ENCODE measurements at regions of chr4 and their contacts with region 1.

Region 1: GRCh38 chr4:107896158-107897045 is 34.9 kb upstream of the CYP2U1 start:
- DNase-seq: peak in 1 of 2 donors; percentile 10
- H3K4me3 ChIP-seq: no peak overlapping the region
- H3K27ac ChIP-seq: peak overlapping the region in 2 of 3 donors; percentile 52 to 58
- H3K4me1 ChIP-seq: peaks cover 32 to 35% of the 10 kb centered on the region in 2 donors
- H3K27me3 ChIP-seq: no peaks in the 10 kb centered on the region
- CTCF ChIP-seq: no peak
- POLR2A ChIP-seq: no peak

Region 2: GRCh38 chr4:107824353-107825071 is 71.9 kb before region 1 on chr4 and contains the start of gene SGMS2:
- intact Hi-C with region 1: loop called (anchors 10 kb)
- DNase-seq: peak; percentile 96 to 97
- H3K4me3 ChIP-seq: peak within 1 kb of the TSS; percentile 27 to 70 (median 64)
- H3K27ac ChIP-seq: peak within 1 kb of the TSS; percentile 94 to 96 (median 96)
- H3K4me1 ChIP-seq: peaks cover 12 to 24% of the 10 kb centered on the region in 2 donors
- H3K27me3 ChIP-seq: no peaks in the 10 kb centered on the region
- CTCF ChIP-seq: no peak
- POLR2A ChIP-seq: peak in 1 of 2 donors; percentile 90
- total RNA-seq, gene SGMS2: 46.5 to 224 (median 120) TPM